Common myeloid progenitor, CD34-positive (primary cell): ENCODE measurements at regions of chr14 and their contacts with region 1.

Region 1: GRCh38 chr14:101235335-101236103 is 325.8 kb upstream of the DIO3 start:
- DNase-seq: peak; percentile 24 to 54 (median 52)
- H3K4me3 ChIP-seq: no peak overlapping the region
- H3K27ac ChIP-seq: no peak overlapping the region
- H3K4me1 ChIP-seq: peaks cover 0 to 38% (median 31%) of the 10 kb centered on the region in 4 experiments
- H3K27me3 ChIP-seq: peaks cover 0 to 2% (median 0%) of the 10 kb centered on the region in 5 experiments

Region 2: DNA sequence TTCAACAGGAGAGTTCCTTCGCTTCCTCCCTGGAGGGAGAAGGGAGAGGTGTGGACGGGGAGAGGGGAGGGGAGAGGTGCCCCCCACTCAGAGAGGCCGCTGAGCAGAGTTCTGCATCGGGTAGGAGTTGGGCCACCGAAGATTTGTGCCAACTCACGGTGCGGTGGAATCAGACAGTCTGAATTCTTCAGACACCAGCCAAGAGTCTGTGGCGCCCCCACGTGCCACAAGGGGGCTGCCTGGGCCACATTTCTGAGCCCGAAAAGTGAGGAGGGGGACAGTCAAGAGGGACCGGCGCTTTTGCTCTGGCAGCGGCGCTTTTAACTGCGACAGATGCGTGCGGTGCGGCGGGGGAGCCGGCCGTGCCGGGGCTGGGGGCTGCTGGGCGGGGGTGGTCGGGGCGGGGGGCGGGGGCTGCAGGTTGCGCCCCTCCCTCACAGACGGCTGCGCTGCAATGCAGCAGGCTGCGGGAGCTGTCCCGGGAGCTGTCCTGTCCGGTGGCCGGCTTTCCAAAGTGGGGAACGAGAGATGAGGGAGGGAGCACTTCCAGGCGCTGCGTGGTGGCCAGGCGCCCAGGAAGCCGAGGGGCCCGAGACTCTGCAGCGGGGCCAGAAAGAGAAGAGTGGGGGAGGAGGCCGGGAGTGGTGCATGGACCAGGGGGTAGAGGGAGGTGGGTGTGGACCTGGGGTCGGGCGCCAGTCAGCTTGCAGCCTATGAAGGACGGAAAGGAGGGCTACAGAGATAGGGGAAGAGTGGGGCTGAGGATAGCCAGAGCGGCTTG is 331.0 kb before region 1 on chr14:
- CTCF ChIA-PET with region 1: interaction called, 22 read pairs
- POLR2A ChIA-PET with region 1: no interaction called
- DNase-seq: peak; percentile 50 to 88 (median 86)
- H3K4me3 ChIP-seq: peak overlapping the region in 1 of 7 experiments; percentile 49
- H3K27ac ChIP-seq: no peak overlapping the region
- H3K4me1 ChIP-seq: peaks cover 0 to 29% (median 22%) of the 10 kb centered on the region in 4 experiments
- H3K27me3 ChIP-seq: peaks cover 0 to 11% (median 0%) of the 10 kb centered on the region in 5 experiments

Region 3: DNA sequence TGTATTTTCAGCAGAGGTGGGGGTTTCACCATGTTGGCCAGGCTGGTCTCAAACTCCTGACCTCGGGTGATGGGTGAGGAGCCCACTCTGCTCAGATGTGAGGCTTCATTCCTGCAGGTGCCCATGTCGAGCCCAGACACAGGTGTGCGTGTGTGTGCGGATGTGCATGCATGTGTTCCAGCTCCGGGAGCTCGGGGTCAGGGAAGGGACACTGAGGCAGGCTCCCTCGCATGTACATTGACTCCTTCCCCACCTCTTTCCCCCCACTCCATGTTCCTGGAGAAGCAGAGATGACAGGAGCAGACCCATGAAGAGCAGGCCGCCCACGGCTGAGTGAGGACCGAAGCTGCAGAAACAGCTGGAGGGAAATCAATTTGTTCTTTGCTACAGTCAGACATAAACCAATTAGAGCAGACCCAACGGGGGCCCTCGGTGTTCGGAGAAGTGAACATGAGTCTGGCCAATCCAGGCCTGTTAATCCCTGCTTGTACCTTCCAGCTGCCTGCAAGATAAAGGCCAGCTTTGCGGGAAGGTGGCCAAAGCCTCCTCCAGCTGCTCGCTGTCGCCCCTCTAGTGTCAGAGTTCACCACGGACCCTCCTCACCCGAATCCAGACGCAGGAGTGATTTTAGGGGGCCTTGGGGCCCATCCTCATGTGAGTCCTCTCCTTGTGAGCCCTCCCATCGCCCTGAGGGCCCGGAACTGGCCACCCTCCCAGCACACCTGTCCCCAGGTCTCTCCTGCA is 11.0 kb before region 1 on chr14:
- CTCF ChIA-PET with region 1: interaction called, 10 read pairs
- POLR2A ChIA-PET with region 1: no interaction called
- DNase-seq: no peak
- H3K4me3 ChIP-seq: no peak overlapping the region
- H3K27ac ChIP-seq: no peak overlapping the region
- H3K4me1 ChIP-seq: peaks cover 0 to 44% (median 25%) of the 10 kb centered on the region in 4 experiments
- H3K27me3 ChIP-seq: no peaks in the 10 kb centered on the region

Region 4: GRCh38 chr14:101380512-101380911 is 145.0 kb after region 1 on chr14:
- CTCF ChIA-PET with region 1: no interaction called
- POLR2A ChIA-PET with region 1: no interaction called
- DNase-seq: no peak
- H3K4me3 ChIP-seq: no peak overlapping the region
- H3K27ac ChIP-seq: no peak overlapping the region
- H3K4me1 ChIP-seq: no peaks in the 10 kb centered on the region
- H3K27me3 ChIP-seq: peaks cover 0 to 11% (median 2%) of the 10 kb centered on the region in 5 experiments

Region 5: GRCh38 chr14:101469402-101470247 is 234.1 kb after region 1 on chr14:
- CTCF ChIA-PET with region 1: no interaction called
- POLR2A ChIA-PET with region 1: no interaction called
- DNase-seq: no peak
- H3K4me3 ChIP-seq: no peak overlapping the region
- H3K27ac ChIP-seq: no peak overlapping the region
- H3K4me1 ChIP-seq: no peaks in the 10 kb centered on the region
- H3K27me3 ChIP-seq: peaks cover 0 to 6% (median 3%) of the 10 kb centered on the region in 5 experiments